Activated CD4-positive, alpha-beta T cell treated with anti-CD3 and anti-CD28 coated beads for 36 hours (primary cell): ENCODE measurements at regions of chr3 and their contacts with region 1.

Region 1: GRCh38 chr3:56801662-56802377 is at the start of gene ARHGEF3:
- DNase-seq: peak; percentile 94
- ATAC-seq: peak; percentile 78
- H3K4me3 Mint-ChIP-seq: peak within 1 kb of the TSS; percentile 92
- H3K27ac Mint-ChIP-seq: peak within 1 kb of the TSS; percentile 86
- H3K4me1 Mint-ChIP-seq: peaks cover 32% of the 10 kb centered on the region
- H3K27me3 Mint-ChIP-seq: no peaks in the 10 kb centered on the region
- total RNA-seq, gene ARHGEF3: 34.4 to 38.3 TPM

Region 2: GRCh38 chr3:56025326-56025725 is 776.5 kb before region 1 on chr3:
- CTCF ChIA-PET with region 1: no interaction called
- POLR2A ChIA-PET with region 1: no interaction called
- intact Hi-C with region 1: no loop called
- DNase-seq: no peak
- ATAC-seq: no peak
- H3K4me3 Mint-ChIP-seq: no peak overlapping the region
- H3K27ac Mint-ChIP-seq: no peak overlapping the region
- H3K4me1 Mint-ChIP-seq: no peaks in the 10 kb centered on the region
- H3K27me3 Mint-ChIP-seq: peaks cover 2% of the 10 kb centered on the region

Region 3: GRCh38 chr3:56556908-56557830 is 244.7 kb before region 1 on chr3 and contains the start of gene CCDC66:
- CTCF ChIA-PET with region 1: no interaction called
- POLR2A ChIA-PET with region 1: no interaction called
- intact Hi-C with region 1: loop called in 1 of 2 experiments (anchors 1 kb)
- DNase-seq: peak; percentile 97
- ATAC-seq: peak; percentile 97
- H3K4me3 Mint-ChIP-seq: peak within 1 kb of the TSS; percentile 93
- H3K27ac Mint-ChIP-seq: peak within 1 kb of the TSS; percentile 99
- H3K4me1 Mint-ChIP-seq: peaks cover 20% of the 10 kb centered on the region
- H3K27me3 Mint-ChIP-seq: no peaks in the 10 kb centered on the region
- total RNA-seq, gene CCDC66: 23.5 to 28.5 TPM

Region 4: DNA sequence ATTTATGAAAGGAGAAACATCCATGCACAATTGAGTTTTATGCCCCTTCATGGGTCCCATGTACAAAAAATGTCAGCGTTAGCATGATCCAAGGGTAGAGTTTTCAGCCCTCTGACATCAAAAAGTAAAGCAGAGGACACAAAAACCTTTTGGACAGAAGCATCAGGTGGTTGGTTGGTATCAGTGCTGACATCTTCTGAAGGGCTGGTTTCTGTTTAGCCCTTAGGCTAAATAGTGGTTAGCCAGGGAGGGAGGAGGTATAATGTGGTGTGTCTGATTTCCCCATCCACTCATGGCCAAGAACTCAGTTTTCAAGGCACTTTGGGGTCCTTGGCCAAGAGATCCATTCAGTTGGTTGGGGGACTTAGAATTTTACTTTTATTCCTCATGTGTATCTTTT is 228.3 kb before region 1 on chr3:
- CTCF ChIA-PET with region 1: no interaction called
- POLR2A ChIA-PET with region 1: no interaction called
- intact Hi-C with region 1: no loop called
- DNase-seq: no peak
- ATAC-seq: no peak
- H3K4me3 Mint-ChIP-seq: no peak overlapping the region
- H3K27ac Mint-ChIP-seq: no peak overlapping the region
- H3K4me1 Mint-ChIP-seq: peaks cover 22% of the 10 kb centered on the region
- H3K27me3 Mint-ChIP-seq: no peaks in the 10 kb centered on the region

Region 5: DNA sequence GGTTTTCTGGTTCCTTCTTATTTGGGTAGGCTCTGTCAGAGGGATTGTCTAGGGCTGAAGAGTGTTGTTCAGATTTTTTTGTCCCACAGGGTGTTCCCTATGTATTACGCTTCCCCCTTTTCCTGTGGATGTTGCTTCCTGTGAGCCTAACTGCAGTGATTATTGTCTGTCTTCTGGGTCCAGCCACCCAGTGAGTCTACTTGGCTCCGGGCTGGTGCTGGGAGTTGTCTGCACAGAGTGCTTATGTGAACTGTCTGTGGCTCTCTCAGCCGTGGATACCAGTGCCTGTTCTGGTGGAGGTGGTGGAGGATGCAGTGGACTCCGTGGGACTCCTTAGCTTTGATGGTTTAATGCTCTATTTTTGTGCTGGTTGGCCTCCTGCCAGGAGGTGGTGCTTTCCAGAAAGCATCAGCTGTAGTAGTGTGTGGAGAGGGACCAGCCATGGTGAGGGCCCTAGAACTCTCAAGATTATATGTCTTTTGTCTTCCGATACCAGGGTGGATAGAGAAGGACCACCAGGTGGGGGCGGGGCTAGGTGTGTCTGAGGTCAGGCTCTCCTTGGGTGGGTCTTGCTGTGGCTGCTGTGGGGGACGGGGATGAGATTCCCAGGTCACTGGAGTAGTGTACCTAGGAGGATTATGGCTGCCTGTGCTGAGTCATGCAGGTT is 191.0 kb before region 1 on chr3:
- CTCF ChIA-PET with region 1: no interaction called
- POLR2A ChIA-PET with region 1: no interaction called
- intact Hi-C with region 1: no loop called
- DNase-seq: no peak
- ATAC-seq: no peak
- H3K4me3 Mint-ChIP-seq: no peak overlapping the region
- H3K27ac Mint-ChIP-seq: peak overlapping the region; percentile 38
- H3K4me1 Mint-ChIP-seq: peaks cover 67% of the 10 kb centered on the region
- H3K27me3 Mint-ChIP-seq: no peaks in the 10 kb centered on the region

Region 6: GRCh38 chr3:56711344-56711743 is 90.5 kb before region 1 on chr3:
- CTCF ChIA-PET with region 1: interaction called, 217 read pairs
- POLR2A ChIA-PET with region 1: no interaction called
- intact Hi-C with region 1: no loop called
- DNase-seq: no peak
- ATAC-seq: no peak
- H3K4me3 Mint-ChIP-seq: no peak overlapping the region
- H3K27ac Mint-ChIP-seq: no peak overlapping the region
- H3K4me1 Mint-ChIP-seq: no peaks in the 10 kb centered on the region
- H3K27me3 Mint-ChIP-seq: no peaks in the 10 kb centered on the region

Region 7: GRCh38 chr3:56758539-56758981 is 43.3 kb before region 1 on chr3:
- CTCF ChIA-PET with region 1: interaction called, 89 read pairs
- POLR2A ChIA-PET with region 1: interaction called, 7 read pairs
- intact Hi-C with region 1: loop called (anchors 1 kb)
- DNase-seq: peak; percentile 66
- ATAC-seq: peak; percentile 83
- H3K4me3 Mint-ChIP-seq: peak overlapping the region; percentile 63
- H3K27ac Mint-ChIP-seq: peak overlapping the region; percentile 83
- H3K4me1 Mint-ChIP-seq: peaks cover 82% of the 10 kb centered on the region
- H3K27me3 Mint-ChIP-seq: no peaks in the 10 kb centered on the region

Region 8: GRCh38 chr3:56819016-56819809 is 17.4 kb after region 1 on chr3:
- CTCF ChIA-PET with region 1: interaction called, 33 read pairs
- POLR2A ChIA-PET with region 1: no interaction called
- intact Hi-C with region 1: no loop called
- DNase-seq: no peak
- ATAC-seq: no peak
- H3K4me3 Mint-ChIP-seq: no peak overlapping the region
- H3K27ac Mint-ChIP-seq: no peak overlapping the region
- H3K4me1 Mint-ChIP-seq: peaks cover 53% of the 10 kb centered on the region
- H3K27me3 Mint-ChIP-seq: no peaks in the 10 kb centered on the region

Region 9: GRCh38 chr3:56980798-56981390 is 179.1 kb after region 1 on chr3:
- CTCF ChIA-PET with region 1: interaction called, 124 read pairs
- POLR2A ChIA-PET with region 1: interaction called, 7 read pairs
- intact Hi-C with region 1: loop called in 1 of 2 experiments (anchors 2 kb)
- DNase-seq: peak; percentile 82
- ATAC-seq: peak; percentile 95
- H3K4me3 Mint-ChIP-seq: no peak overlapping the region
- H3K27ac Mint-ChIP-seq: peak overlapping the region; percentile 78
- H3K4me1 Mint-ChIP-seq: peaks cover 23% of the 10 kb centered on the region
- H3K27me3 Mint-ChIP-seq: no peaks in the 10 kb centered on the region

Region 10: DNA sequence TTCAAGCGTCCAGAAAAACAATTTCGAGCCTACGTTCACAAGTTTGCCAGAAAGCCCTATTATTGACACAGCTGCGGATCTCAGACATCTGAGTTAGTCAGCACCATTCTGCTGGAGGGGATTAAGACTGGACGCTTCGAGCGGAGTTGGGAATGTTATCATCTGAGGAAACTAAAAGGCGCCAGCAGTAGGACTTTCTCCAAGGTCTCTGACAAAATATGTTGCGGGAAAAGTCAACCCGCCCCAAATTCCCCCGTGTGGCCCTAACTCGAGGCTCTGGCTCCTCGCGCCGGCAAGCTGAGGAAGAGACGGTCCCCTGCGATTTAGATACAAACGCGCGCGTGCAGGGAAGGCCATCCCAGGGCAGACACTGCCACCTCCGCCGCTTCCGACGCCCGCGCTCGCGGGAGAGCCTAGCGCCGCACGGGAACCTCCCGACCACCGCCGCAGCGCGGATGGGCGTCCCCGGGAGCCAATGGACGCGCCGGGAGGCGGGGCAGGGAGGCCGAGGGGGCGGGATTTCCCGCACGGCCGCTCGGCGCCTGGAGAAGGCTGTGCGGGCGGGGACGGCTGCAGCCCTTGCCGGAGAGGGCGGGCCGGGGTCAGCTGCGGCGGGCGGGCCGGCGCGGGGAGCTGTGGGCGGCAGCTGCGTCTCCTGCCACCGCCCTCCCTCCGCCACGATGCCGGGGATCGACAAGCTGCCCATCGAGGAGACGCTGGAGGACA is 425.5 kb after region 1 on chr3 and contains the start of gene APPL1:
- CTCF ChIA-PET with region 1: no interaction called
- POLR2A ChIA-PET with region 1: no interaction called
- intact Hi-C with region 1: no loop called
- DNase-seq: peak; percentile 94
- ATAC-seq: peak; percentile 92
- H3K4me3 Mint-ChIP-seq: peak within 1 kb of the TSS; percentile 88
- H3K27ac Mint-ChIP-seq: peak within 1 kb of the TSS; percentile 78
- H3K4me1 Mint-ChIP-seq: peaks cover 29% of the 10 kb centered on the region
- H3K27me3 Mint-ChIP-seq: no peaks in the 10 kb centered on the region
- total RNA-seq, gene APPL1: 38.4 to 39.4 TPM